ENCODE measurements at regions of chr1 and their contacts with region 1.

Region 1: DNA sequence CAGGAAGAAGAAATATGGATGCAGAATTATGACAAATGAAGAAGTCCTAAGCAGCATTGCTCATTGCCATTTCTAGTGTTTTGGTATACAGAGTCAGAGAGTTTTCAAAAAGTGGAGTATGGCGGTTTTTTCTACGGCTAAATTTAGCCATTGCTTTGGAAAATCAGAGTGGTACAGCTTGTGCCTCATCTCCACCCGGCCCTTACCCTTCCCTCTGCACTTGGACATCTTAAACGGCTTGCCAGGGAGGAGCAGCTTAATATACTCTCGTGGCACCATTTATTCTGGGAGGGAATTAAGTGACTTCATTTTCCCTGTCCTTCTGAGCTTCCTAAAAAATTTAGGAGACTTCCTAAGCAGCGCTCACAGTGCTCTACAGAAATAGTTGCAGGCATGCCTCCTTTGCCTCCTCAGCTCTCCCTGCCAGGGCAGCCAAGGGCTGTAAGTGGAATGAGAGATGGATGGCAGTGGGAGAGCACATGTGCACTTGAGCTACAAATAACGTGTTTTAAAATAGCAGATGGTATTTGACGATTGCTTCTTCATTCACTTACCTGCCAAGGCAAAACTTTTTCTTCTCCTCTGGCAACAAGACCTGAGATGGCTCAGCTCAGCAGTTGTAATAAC is 51.5 kb upstream of the VAMP3 start:
- DNase-seq: no peak

Region 2: DNA sequence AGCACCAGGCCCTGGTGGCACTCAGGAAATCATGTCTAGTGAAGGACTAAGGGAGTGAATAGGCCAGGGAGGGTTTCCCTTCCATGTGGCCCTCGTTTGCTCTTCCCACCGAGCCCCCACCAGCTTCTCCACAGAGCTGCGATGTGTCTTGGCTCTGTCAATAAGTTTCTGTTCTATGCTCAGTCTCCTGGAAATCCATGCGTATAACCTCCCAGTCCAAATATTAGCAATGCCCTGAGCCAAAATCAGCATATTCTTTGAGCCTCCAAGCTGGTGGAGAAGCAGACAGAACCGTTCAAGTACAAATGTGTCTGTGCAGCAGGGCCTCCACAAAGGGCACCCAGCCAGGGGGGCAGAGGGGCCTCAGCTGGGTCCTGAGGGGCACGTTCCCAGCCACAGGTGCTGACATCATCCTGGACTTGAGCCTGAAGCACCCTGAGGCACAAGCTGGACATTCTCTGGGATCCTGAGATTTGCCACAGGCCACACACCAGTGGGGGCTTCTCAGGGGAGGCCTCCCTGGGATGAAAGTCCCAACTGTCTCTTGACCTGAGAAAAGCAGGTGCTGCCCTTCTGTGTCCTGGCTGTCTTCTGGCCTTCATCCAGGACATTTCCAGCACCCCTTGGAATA is 299.0 kb before region 1 on chr1:
- CTCF ChIA-PET with region 1: no interaction called
- POLR2A ChIA-PET with region 1: no interaction called
- DNase-seq: no peak

Region 3: GRCh38 chr1:7646981-7647901 is 72.3 kb before region 1 on chr1:
- CTCF ChIA-PET with region 1: no interaction called
- POLR2A ChIA-PET with region 1: no interaction called
- DNase-seq: peak; percentile 89

Region 4: DNA sequence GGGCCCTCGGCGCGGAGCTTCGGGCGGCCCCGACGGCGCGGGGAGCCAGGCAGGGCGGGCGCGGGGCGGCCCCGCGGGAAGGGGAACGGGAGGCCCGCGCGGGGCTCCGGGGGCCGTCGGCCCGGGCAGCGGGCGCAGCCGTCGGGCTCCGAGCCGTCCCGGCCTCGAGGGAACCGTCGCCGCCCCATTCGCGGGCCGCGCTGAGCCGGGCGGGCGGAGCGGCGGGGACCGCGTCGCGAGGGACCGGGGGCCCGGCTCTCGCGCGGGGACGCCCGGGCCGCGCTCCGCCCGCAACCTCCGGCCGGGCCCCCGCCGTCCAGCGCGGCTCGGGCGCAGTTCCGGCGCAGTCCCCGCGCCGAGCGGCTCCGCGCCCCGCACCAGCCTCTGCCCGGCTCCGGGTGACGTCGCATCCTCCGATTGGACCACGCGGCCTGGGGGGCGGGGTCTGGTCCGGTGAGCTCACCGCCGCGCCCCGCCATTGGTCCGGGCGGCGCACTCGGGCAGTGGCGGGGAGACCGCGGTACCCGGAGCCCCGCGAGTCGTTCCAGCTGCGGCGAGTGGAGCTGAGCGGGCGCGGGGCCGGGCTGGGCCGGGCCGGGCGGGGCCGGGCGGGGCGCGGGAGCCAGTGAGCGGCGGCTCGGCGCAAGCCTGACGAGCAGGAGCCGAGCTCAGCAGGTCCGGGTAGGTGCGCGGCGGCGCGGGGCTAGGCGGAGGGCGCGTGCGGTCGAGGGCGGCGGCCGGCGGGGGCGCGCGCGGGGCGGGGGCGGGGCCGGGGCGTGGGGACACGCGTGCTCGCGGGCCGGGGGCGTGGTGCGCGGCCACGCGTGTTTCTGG is 15.2 kb before region 1 on chr1:
- CTCF ChIA-PET with region 1: no interaction called
- POLR2A ChIA-PET with region 1: interaction called, 10 read pairs
- DNase-seq: peak; percentile 99